Mammary epithelial cell (primary cell): ENCODE measurements at regions of chr20 and their contacts with region 1.

Region 1: DNA sequence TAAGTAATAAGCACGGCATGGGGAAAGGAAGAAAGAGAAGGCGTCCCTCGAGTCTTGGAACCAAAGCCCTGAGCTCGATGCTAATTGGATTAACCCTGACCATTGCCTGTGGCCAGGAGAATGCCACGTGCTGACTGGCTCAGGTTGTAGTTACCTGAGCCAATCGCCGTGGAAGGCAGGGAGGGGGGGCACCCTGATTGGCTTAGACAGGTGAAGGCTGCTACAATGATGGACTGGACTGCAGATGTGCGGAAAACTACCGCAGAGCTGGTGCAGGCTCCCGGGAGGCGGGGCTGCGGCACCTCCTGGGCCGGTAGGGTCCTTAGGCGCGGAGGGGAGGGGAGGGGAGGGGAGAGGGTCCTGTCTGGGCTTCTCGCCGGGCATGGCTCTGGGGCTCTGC is 121.3 kb downstream of the TFAP2C start:
- DNase-seq: no peak
- H3K4me3 ChIP-seq: no peak overlapping the region
- H3K27ac ChIP-seq: no peak overlapping the region
- H3K4me1 ChIP-seq: no peaks in the 10 kb centered on the region
- H3K27me3 ChIP-seq: no peaks in the 10 kb centered on the region
- CTCF ChIP-seq: no peak

Region 2: DNA sequence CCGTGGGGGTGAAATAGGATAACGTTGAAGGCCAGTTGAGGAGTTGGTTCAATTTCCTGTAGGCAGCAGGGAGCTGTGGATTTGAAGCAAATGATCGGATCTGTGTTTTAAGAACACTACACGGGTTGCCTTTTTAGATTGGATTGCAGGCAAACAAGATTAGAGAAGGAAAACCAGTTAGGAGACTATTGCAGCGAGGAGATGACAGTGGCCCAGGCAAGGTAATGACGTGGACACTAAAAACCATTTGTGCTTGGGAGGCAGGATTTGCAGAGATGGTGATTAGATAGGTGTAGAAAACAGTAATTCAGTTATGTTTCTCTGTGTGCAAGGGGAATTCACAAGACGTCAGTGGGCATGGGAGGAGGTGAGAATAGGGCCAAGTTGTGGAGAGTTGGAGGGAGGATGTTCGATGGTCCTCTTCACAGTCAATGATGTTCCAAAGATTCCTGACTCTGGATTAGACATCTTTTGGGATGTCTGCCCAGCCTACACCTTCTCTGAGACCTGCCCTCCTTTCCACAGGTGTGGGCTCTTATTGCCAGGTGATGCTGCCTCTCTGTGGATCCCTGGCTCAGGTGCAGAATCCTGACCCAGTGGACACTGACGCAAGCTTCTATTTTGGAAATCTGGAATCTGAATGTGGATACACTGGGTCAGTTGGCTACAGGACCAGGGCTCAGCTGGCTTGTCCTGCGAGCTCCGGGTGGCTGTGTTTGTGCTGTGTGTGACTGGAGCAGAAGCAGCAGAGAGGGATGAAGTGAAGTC is 67.2 kb before region 1 on chr20:
- CTCF ChIA-PET with region 1: no interaction called
- dilution Hi-C with region 1: loop called (anchors 5 kb)
- in situ Hi-C with region 1: no loop called
- intact Hi-C with region 1: no loop called
- DNase-seq: no peak
- H3K4me3 ChIP-seq: no peak overlapping the region
- H3K27ac ChIP-seq: no peak overlapping the region
- H3K4me1 ChIP-seq: no peaks in the 10 kb centered on the region
- H3K27me3 ChIP-seq: no peaks in the 10 kb centered on the region
- CTCF ChIP-seq: no peak

Region 3: DNA sequence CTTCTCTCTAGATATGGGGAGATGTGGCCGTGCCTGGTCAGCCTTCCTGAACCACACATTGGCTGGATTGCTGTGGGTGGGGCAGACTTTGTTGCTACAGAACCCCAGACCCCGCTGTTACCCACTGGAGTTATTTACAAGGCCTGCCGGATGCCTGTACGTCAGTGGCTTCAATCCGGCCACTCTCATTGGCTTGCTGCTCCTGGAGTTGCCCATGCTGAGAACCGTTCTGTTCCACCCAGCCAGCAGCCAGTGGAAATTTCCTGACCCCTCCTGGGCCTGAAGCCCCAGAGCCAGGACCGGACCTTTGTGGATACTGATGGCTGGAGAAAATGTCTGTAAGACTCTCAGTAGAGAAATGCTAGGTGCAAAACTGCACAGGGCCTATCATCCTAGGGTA is 19.4 kb before region 1 on chr20:
- CTCF ChIA-PET with region 1: no interaction called
- dilution Hi-C with region 1: no loop called
- in situ Hi-C with region 1: no loop called
- intact Hi-C with region 1: no loop called
- DNase-seq: no peak
- H3K4me3 ChIP-seq: no peak overlapping the region
- H3K27ac ChIP-seq: no peak overlapping the region
- H3K4me1 ChIP-seq: no peaks in the 10 kb centered on the region
- H3K27me3 ChIP-seq: no peaks in the 10 kb centered on the region
- CTCF ChIP-seq: no peak

Region 4: DNA sequence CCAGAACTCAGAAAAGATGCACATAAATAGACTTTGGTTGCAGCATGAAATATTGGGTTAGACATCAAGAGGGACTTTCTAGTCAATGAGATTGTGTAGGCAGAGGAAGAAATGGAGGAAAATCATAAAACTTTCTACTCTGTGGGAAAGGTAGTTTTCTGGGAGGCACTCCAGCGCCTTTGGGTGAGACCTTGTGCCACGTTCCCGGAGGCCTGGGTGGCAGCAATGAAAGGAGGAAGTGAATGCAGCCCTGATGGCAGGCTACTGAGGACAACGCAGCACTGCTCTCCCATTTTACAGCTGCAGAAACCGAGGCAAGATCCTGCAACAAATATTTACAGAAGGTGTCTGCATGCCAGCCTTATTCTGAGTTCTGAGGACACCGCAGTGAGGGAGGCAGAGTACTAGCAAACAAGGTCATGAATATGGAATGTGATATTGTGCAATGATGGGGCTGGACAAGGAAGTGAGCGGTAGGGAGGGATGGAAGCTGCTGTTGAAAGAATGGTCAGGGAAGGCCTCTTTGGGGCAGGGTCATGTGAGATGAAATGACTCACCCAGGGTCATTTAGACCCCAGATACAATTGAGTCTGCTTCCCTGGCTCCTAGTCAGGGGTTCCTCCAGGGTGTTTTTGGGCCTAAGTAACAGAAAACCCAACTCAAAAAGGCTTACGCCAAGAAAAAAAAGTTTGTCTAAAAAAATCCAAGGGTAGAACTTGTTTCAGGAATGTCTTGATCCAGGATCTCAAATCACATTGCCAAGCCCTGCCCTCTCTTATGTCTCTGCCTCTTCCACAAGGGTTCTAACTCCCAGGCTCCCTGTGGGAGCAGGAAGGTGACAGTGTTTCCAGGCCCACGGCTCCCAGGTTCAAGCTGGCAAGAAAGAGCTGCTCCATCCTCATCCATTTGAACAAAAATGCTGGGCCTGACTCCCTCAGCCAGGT is 37.9 kb after region 1 on chr20:
- CTCF ChIA-PET with region 1: no interaction called
- dilution Hi-C with region 1: no loop called
- in situ Hi-C with region 1: no loop called
- intact Hi-C with region 1: no loop called
- DNase-seq: peak; percentile 85
- H3K4me3 ChIP-seq: no peak overlapping the region
- H3K27ac ChIP-seq: peak overlapping the region; percentile 99
- H3K4me1 ChIP-seq: peaks cover 18% of the 10 kb centered on the region
- H3K27me3 ChIP-seq: no peaks in the 10 kb centered on the region
- CTCF ChIP-seq: no peak

Region 5: GRCh38 chr20:56801744-56802670 is 51.6 kb after region 1 on chr20:
- CTCF ChIA-PET with region 1: no interaction called
- dilution Hi-C with region 1: no loop called
- in situ Hi-C with region 1: no loop called
- intact Hi-C with region 1: no loop called
- DNase-seq: no peak
- H3K4me3 ChIP-seq: no peak overlapping the region
- H3K27ac ChIP-seq: no peak overlapping the region
- H3K4me1 ChIP-seq: peaks cover 17% of the 10 kb centered on the region
- H3K27me3 ChIP-seq: no peaks in the 10 kb centered on the region
- CTCF ChIP-seq: no peak

Region 6: DNA sequence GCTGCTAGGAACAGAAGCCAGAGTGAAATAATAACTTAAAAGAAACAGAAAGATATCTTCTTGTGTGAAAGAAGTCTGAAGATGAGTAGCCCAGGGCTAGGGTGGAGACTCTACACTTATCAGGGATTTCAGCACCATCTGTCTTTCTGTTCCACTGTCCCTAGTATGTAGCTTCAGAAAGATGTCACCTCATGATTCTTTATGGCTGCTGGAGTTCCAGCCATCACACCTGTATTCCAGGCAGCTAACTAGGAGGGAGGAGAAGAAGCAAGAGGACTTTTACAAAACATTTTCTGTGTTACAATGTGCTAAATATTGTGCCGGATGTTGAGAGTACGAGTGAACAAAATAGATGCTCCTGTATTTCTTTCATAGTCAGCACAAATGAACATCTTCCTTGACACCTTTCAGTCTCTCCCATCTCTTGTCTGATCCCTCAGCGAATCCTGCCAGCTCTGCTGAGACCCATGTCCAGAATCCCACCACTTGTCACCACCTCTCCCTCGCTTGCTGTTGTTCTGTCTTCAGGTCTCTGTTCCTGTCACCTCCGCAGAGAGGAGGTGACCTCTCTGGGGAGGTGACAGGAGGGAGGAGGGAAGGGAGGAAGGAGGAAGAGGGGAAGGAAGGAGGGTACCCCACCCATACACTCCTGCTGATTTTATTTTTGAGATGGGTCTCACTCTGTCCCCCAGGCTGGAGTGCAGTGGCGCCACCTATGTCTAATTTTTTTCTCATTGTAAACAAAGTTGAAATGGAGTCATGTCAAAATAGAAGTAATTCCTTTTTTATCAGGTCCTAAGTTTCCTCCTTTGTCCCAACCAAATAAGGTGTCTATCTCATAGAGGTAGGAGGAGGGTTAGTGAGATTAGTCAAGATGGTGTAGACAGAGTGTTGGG is 67.6 kb after region 1 on chr20:
- CTCF ChIA-PET with region 1: no interaction called
- dilution Hi-C with region 1: loop called (anchors 5 kb)
- in situ Hi-C with region 1: no loop called
- intact Hi-C with region 1: no loop called
- DNase-seq: no peak
- H3K4me3 ChIP-seq: no peak overlapping the region
- H3K27ac ChIP-seq: no peak overlapping the region
- H3K4me1 ChIP-seq: no peaks in the 10 kb centered on the region
- H3K27me3 ChIP-seq: no peaks in the 10 kb centered on the region
- CTCF ChIP-seq: peak in 1 of 2 donors; percentile 16

Region 7: GRCh38 chr20:56875046-56875551 is 124.7 kb after region 1 on chr20:
- CTCF ChIA-PET with region 1: no interaction called
- dilution Hi-C with region 1: loop called (anchors 5 kb)
- in situ Hi-C with region 1: no loop called
- intact Hi-C with region 1: no loop called
- DNase-seq: peak; percentile 91
- H3K4me3 ChIP-seq: no peak overlapping the region
- H3K27ac ChIP-seq: peak overlapping the region; percentile 12
- H3K4me1 ChIP-seq: peaks cover 7% of the 10 kb centered on the region
- H3K27me3 ChIP-seq: no peaks in the 10 kb centered on the region
- CTCF ChIP-seq: no peak